ENCODE measurements at regions of chr5 and their contacts with region 1.

Region 1: DNA sequence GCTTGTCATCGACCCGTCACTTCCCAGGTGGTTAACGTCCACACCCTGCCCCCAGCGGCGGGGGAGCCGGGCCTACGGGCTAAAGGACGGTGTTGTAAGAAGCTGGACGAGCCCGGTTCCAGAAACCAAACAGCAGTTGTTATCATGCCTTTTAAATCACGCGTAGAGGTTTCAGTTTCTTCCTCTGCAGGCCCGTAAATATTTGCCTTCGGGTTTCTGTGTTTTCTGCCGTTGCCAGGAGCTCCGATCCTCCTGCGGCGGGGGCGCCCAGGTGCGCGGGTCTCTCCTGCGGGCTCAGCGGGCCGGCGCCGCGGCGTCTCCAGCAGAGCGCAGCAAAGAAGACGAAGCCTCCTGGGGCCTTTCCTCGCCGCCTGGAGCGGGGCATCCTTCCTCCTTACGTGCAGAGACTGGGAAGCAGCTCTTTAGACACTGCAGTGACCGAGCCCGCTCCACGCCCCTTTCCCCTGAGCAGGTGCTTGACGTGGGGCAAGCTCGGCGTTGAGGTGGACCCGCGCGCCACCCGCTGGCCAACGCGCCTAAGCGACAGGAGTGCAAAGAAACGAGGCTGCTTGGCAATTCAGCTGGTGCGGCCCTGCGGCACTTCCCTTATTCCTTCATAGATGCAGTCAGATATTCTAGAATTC is 21.8 kb upstream of the TTC1 start:
- DNase-seq: peak; percentile 67 to 76 (median 72)
- H3K4me3 ChIP-seq: peak overlapping the region in 1 of 2 donors; percentile 44
- H3K4me3 Mint-ChIP-seq: peak overlapping the region; percentile 52 to 79 (median 72)
- H3K27ac ChIP-seq: no peak overlapping the region
- H3K27ac Mint-ChIP-seq: peak overlapping the region in 4 of 7 donors; percentile 25 to 66 (median 45)
- H3K4me1 ChIP-seq: no peaks in the 10 kb centered on the region
- H3K4me1 Mint-ChIP-seq: peaks cover 0 to 3% (median 0%) of the 10 kb centered on the region in 4 donors
- H3K27me3 ChIP-seq: no peaks in the 10 kb centered on the region
- H3K27me3 Mint-ChIP-seq: peaks cover 14 to 15% of the 10 kb centered on the region in 2 donors

Region 2: GRCh38 chr5:159274676-159275075 is 712.5 kb before region 1 on chr5:
- CTCF ChIA-PET with region 1: interaction called, 15 read pairs
- POLR2A ChIA-PET with region 1: no interaction called
- intact Hi-C with region 1: no loop called
- DNase-seq: no peak
- H3K4me3 ChIP-seq: no peak overlapping the region
- H3K4me3 Mint-ChIP-seq: peak overlapping the region in 3 of 8 donors; percentile 3 to 41 (median 24)
- H3K27ac ChIP-seq: no peak overlapping the region
- H3K27ac Mint-ChIP-seq: peak overlapping the region in 1 of 7 donors; percentile 0
- H3K4me1 ChIP-seq: peaks cover 15% of the 10 kb centered on the region
- H3K4me1 Mint-ChIP-seq: peaks cover 8 to 25% (median 18%) of the 10 kb centered on the region in 4 donors
- H3K27me3 ChIP-seq: no peaks in the 10 kb centered on the region
- H3K27me3 Mint-ChIP-seq: no peaks in the 10 kb centered on the region

Region 3: GRCh38 chr5:159331093-159331973 is 655.8 kb before region 1 on chr5:
- CTCF ChIA-PET with region 1: interaction called, 13 read pairs
- POLR2A ChIA-PET with region 1: interaction called, 5 read pairs
- intact Hi-C with region 1: loop called (anchors 1 kb)
- DNase-seq: peak; percentile 72 to 79 (median 74)
- H3K4me3 ChIP-seq: peak overlapping the region in 1 of 2 donors; percentile 46
- H3K4me3 Mint-ChIP-seq: peak overlapping the region; percentile 73 to 87 (median 80)
- H3K27ac ChIP-seq: peak overlapping the region; percentile 23
- H3K27ac Mint-ChIP-seq: peak overlapping the region; percentile 47 to 88 (median 80)
- H3K4me1 ChIP-seq: peaks cover 19% of the 10 kb centered on the region
- H3K4me1 Mint-ChIP-seq: peaks cover 15 to 39% (median 27%) of the 10 kb centered on the region in 4 donors
- H3K27me3 ChIP-seq: no peaks in the 10 kb centered on the region
- H3K27me3 Mint-ChIP-seq: peaks cover 0 to 2% of the 10 kb centered on the region in 2 donors

Region 4: GRCh38 chr5:159444441-159445082 is 542.6 kb before region 1 on chr5:
- CTCF ChIA-PET with region 1: interaction called, 135 read pairs
- POLR2A ChIA-PET with region 1: no interaction called
- intact Hi-C with region 1: no loop called
- DNase-seq: peak in 4 of 5 donors; percentile 26 to 49 (median 32)
- H3K4me3 ChIP-seq: no peak overlapping the region
- H3K4me3 Mint-ChIP-seq: no peak overlapping the region
- H3K27ac ChIP-seq: no peak overlapping the region
- H3K27ac Mint-ChIP-seq: peak overlapping the region in 1 of 7 donors; percentile 35
- H3K4me1 ChIP-seq: no peaks in the 10 kb centered on the region
- H3K4me1 Mint-ChIP-seq: peaks cover 0 to 6% (median 5%) of the 10 kb centered on the region in 4 donors
- H3K27me3 ChIP-seq: no peaks in the 10 kb centered on the region
- H3K27me3 Mint-ChIP-seq: no peaks in the 10 kb centered on the region

Region 5: DNA sequence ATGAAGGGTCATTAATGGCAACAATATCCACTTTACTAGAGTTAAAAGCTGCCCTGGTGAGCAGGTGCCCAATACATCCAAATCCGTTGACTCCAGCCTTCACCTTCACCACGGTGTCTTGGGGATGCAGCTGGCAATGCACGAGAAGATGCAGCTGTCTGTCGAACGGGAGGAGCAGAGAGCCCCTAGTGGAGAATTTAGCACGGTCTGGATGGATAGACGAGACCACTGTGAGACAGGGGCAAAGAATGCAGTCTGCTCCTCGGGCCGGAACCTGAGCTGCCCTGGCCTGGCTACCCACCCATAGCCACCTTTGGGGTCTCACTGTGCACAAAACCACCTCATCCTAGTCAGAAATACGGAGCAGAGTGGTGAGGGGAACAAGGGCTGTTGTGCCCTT is 35.8 kb before region 1 on chr5:
- CTCF ChIA-PET with region 1: interaction called, 10 read pairs
- POLR2A ChIA-PET with region 1: no interaction called
- intact Hi-C with region 1: no loop called
- DNase-seq: no peak
- H3K4me3 ChIP-seq: no peak overlapping the region
- H3K4me3 Mint-ChIP-seq: no peak overlapping the region
- H3K27ac ChIP-seq: no peak overlapping the region
- H3K27ac Mint-ChIP-seq: peak overlapping the region in 1 of 7 donors; percentile 9
- H3K4me1 ChIP-seq: no peaks in the 10 kb centered on the region
- H3K4me1 Mint-ChIP-seq: no peaks in the 10 kb centered on the region
- H3K27me3 ChIP-seq: no peaks in the 10 kb centered on the region
- H3K27me3 Mint-ChIP-seq: peaks cover 5 to 26% of the 10 kb centered on the region in 2 donors

Region 6: GRCh38 chr5:160021831-160022446 is 34.8 kb after region 1 on chr5:
- CTCF ChIA-PET with region 1: interaction called, 11 read pairs
- POLR2A ChIA-PET with region 1: interaction called, 3 read pairs
- intact Hi-C with region 1: no loop called
- DNase-seq: peak; percentile 58 to 70 (median 67)
- H3K4me3 ChIP-seq: no peak overlapping the region
- H3K4me3 Mint-ChIP-seq: peak overlapping the region in 5 of 8 donors; percentile 5 to 76 (median 55)
- H3K27ac ChIP-seq: no peak overlapping the region
- H3K27ac Mint-ChIP-seq: peak overlapping the region; percentile 39 to 95 (median 85)
- H3K4me1 ChIP-seq: peaks cover 21% of the 10 kb centered on the region
- H3K4me1 Mint-ChIP-seq: peaks cover 20 to 40% (median 30%) of the 10 kb centered on the region in 4 donors
- H3K27me3 ChIP-seq: no peaks in the 10 kb centered on the region
- H3K27me3 Mint-ChIP-seq: no peaks in the 10 kb centered on the region

Measured in CD4-positive, alpha-beta memory T cell (primary cell).